GM23248 (cell line): ENCODE measurements at regions of chr22 and their contacts with region 1.

Region 1: GRCh38 chr22:36860821-36861659 is at the start of gene NCF4:
- DNase-seq: no peak
- H3K4me3 ChIP-seq: no peak within 1 kb of the TSS
- H3K27ac ChIP-seq: no peak within 1 kb of the TSS
- H3K4me1 ChIP-seq: 0 out of 2 replicates have a peak, but pooled peaks cover 2% of the 10 kb centered on the region
- H3K27me3 ChIP-seq: peaks cover 19% of the 10 kb centered on the region
- total RNA-seq, gene NCF4: not detected in 2 replicates

Region 2: GRCh38 chr22:36790648-36791047 is 70.4 kb before region 1 on chr22:
- in situ Hi-C with region 1: no loop called
- DNase-seq: no peak
- H3K4me3 ChIP-seq: no peak overlapping the region
- H3K27ac ChIP-seq: no peak overlapping the region
- H3K4me1 ChIP-seq: no peaks in the 10 kb centered on the region
- H3K27me3 ChIP-seq: peaks cover 80% of the 10 kb centered on the region

Region 3: DNA sequence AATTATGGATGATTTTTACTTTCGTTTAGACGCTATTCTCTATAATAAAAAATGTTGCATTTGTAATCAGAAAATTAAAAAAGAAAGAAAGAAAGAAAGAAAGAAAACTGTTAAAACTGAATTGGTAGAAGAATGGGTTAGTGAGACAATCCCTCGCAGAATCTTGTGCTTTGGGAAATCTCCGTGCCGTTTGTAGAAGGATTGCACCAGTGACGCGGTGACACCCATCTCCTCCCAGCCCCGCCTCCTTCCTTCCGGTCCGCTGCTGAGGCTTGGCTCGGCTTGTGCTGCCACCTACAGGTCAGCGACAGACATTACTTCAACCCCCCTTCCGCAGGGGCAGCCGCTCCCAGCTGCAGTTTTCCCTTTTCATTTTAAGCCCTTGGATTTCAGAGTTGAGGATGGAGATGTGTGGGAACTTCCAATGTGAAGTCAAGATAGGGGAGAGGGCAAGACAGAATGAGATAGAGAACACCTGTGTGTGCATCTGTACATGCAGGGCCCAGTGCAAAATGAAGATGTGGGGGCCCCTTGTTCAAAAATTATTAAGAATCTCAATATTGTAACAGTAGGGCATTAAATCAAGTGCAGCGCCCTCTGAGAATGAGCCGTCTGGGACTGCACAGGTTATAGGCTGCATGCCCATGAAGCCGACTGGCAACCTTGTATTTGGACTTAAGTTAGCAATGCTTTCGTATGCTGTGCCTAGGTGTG is 117.1 kb after region 1 on chr22:
- in situ Hi-C with region 1: loop called (anchors 10 kb)
- DNase-seq: peak; percentile 95
- H3K4me3 ChIP-seq: peak overlapping the region; percentile 73
- H3K27ac ChIP-seq: no peak overlapping the region
- H3K4me1 ChIP-seq: 0 out of 2 replicates have a peak, but pooled peaks cover 4% of the 10 kb centered on the region
- H3K27me3 ChIP-seq: peaks cover 9% of the 10 kb centered on the region; the same call in 1 of the 2 replicates